Calu3 (cell line): ENCODE measurements at regions of chr5 and their contacts with region 1.

Region 1: GRCh38 chr5:92838253-92838652 is 742.8 kb downstream of the NR2F1-AS1 start:
- DNase-seq: peak; percentile 28
- H3K4me3 Mint-ChIP-seq: no peak overlapping the region
- H3K27ac Mint-ChIP-seq: no peak overlapping the region
- H3K4me1 Mint-ChIP-seq: peaks cover 2% of the 10 kb centered on the region
- H3K27me3 Mint-ChIP-seq: no peaks in the 10 kb centered on the region
- CTCF ChIP-seq: no peak

Region 2: DNA sequence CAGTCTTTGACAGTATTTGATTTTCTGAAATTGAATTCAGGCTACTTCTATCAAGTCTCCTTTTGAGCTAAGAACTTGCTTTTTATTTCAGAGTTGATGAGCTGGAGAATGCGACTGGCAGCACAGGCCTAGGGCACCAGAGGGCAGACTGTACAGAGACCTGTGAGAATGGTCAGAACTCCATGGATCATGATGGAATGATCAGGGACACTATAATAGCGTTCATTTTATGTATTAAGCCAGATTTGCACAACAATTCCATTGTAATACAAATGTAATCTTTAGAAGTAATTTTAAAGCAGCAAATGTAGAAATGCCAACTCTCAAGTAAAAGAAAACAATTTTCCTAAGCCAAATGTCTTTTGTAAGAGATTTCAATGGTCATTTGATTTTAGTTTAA is 159.6 kb before region 1 on chr5:
- CTCF ChIA-PET with region 1: interaction called, 3 read pairs
- intact Hi-C with region 1: loop called (anchors 1 kb)
- DNase-seq: peak; percentile 45
- H3K4me3 Mint-ChIP-seq: no peak overlapping the region
- H3K27ac Mint-ChIP-seq: no peak overlapping the region
- H3K4me1 Mint-ChIP-seq: no peaks in the 10 kb centered on the region
- H3K27me3 Mint-ChIP-seq: no peaks in the 10 kb centered on the region
- CTCF ChIP-seq: no peak

Region 3: DNA sequence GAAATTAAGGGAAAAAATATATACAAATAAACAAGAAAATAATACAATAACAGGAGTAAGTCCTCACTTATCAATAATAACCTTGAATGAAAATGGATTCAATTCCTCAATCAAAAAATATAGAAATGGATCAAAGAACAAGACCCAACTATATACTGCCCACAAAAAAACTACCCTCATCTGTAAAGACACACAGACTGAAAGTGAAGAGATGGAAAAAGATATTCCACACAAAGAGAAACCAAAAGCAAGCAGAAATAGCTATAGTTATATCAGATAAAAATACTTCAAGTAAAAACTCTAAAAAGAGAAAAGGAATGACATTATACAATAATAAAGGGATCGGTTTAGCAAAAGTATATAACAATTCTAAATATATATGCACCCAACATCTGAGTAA is 1713.6 kb after region 1 on chr5:
- CTCF ChIA-PET with region 1: no interaction called
- intact Hi-C with region 1: no loop called
- DNase-seq: no peak
- H3K4me3 Mint-ChIP-seq: no peak overlapping the region
- H3K27ac Mint-ChIP-seq: no peak overlapping the region
- H3K4me1 Mint-ChIP-seq: no peaks in the 10 kb centered on the region
- H3K27me3 Mint-ChIP-seq: no peaks in the 10 kb centered on the region
- CTCF ChIP-seq: no peak